ENCODE measurements at regions of chr13 and their contacts with region 1.

Region 1: DNA sequence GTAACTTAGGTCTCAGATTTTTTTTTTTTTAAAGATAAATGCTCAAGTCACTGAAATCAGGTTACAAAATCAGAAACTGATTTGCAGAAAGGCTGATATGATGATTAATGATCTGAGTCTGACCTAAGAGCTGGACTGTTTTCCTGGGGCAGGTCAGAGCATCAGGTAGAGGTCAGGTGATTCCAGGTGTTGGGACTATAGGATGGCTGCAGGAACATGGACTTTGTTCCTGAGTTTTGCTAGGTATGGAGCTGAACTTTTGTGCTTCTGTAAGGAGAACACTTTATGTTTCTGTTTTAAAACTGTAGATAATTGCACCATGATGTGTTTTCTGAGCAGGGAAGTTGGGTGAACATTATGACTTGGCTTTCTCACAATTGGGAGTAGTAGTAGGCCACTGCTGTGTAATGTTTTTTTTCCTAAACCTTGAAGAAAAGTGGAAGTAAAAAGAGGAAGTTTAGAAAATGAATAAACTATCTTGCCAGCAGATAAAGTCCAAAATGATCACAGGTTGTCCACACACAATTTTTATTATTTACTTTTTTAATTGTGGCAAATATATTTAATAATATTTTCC is 297.2 kb downstream of the DCT start:
- DNase-seq: no peak
- H3K4me3 ChIP-seq: no peak overlapping the region
- CTCF ChIP-seq: no peak
- POLR2A ChIP-seq: no peak

Region 2: DNA sequence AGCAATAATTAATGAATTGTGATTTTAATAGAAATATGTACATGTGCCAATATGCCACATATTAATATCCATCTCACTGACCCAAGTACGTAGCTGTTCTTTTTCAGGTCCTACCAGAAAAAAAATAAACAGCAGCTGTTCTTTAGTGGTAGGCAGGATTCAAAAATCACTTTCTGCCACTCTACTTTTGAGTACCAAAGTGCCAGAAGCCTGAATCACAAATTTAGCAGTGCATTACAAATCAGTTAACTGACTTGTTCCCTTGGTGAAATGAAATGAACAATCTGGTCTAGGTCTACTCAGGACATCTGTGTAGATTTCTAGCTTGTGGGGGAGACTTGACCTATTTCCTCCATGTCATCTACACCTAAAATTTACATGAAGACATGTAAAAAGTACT is 1731.2 kb before region 1 on chr13:
- intact Hi-C with region 1: no loop called
- DNase-seq: no peak
- H3K4me3 ChIP-seq: no peak overlapping the region
- CTCF ChIP-seq: no peak
- POLR2A ChIP-seq: no peak

Region 3: GRCh38 chr13:94822356-94822755 is 640.1 kb after region 1 on chr13:
- intact Hi-C with region 1: loop called (anchors 5 kb)
- DNase-seq: no peak
- H3K4me3 ChIP-seq: no peak overlapping the region
- CTCF ChIP-seq: no peak
- POLR2A ChIP-seq: no peak